ENCODE measurements at regions of chr7 and their contacts with region 1.

Region 1: GRCh38 chr7:132394283-132395198 is 181.7 kb downstream of the PLXNA4 start:
- DNase-seq: peak in 1 of 4 experiments; percentile 18
- ATAC-seq: peak; percentile 68
- H3K4me3 ChIP-seq: no peak overlapping the region
- H3K27ac ChIP-seq: no peak overlapping the region
- H3K4me1 ChIP-seq: no peaks in the 10 kb centered on the region
- H3K27me3 ChIP-seq: peaks cover 3 to 22% of the 10 kb centered on the region in 2 experiments; a peak in 4 of 5 replicates
- CTCF ChIP-seq: peak; percentile 30 to 43 (median 41); a peak in 4 of 6 replicates
- EP300 ChIP-seq: no peak
- POLR2A ChIP-seq: no peak
- RAD21 ChIP-seq: peak; percentile 60 to 61

Region 2: DNA sequence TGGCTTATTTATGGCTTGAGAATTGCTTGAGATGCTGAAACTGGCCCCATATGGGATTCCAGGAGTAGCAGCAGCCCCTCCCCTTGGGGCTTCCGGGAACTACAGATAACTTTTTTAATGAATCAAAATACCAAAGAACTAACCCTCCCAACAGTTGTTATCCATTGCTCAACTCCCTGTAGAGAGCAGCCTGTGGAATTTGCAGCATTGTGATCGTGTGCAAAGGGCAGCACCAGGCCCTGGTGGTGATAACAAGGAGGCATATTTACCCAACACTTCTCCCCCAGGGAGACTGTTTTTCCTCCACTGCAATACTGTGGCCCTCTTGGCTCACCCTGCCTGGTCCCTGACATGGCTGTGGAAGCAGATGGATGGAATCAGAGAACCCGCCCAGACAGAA is 14.5 kb before region 1 on chr7:
- CTCF ChIA-PET with region 1: no interaction called
- POLR2A ChIA-PET with region 1: no interaction called
- in situ Hi-C with region 1: no loop called
- intact Hi-C with region 1: no loop called
- DNase-seq: no peak
- ATAC-seq: no peak
- H3K4me3 ChIP-seq: no peak overlapping the region
- H3K27ac ChIP-seq: no peak overlapping the region
- H3K4me1 ChIP-seq: no peaks in the 10 kb centered on the region
- H3K27me3 ChIP-seq: 0 out of 5 replicates have a peak, but pooled peaks cover 0 to 5% of the 10 kb centered on the region in 2 experiments
- CTCF ChIP-seq: no peak
- EP300 ChIP-seq: no peak
- POLR2A ChIP-seq: no peak
- RAD21 ChIP-seq: no peak

Region 3: GRCh38 chr7:132508827-132509301 is 114.3 kb after region 1 on chr7:
- CTCF ChIA-PET with region 1: no interaction called
- POLR2A ChIA-PET with region 1: no interaction called
- in situ Hi-C with region 1: no loop called
- intact Hi-C with region 1: no loop called
- DNase-seq: peak in 1 of 4 experiments; percentile 11
- ATAC-seq: peak; percentile 48; the same call in 2 of the 3 replicates
- H3K4me3 ChIP-seq: no peak overlapping the region
- H3K27ac ChIP-seq: no peak overlapping the region
- H3K4me1 ChIP-seq: no peaks in the 10 kb centered on the region
- H3K27me3 ChIP-seq: peaks cover 37 to 53% of the 10 kb centered on the region in 2 experiments
- CTCF ChIP-seq: no peak
- EP300 ChIP-seq: no peak
- POLR2A ChIP-seq: no peak
- RAD21 ChIP-seq: no peak

Region 4: GRCh38 chr7:132580717-132581285 is 186.3 kb after region 1 on chr7:
- CTCF ChIA-PET with region 1: interaction called, 6 read pairs
- POLR2A ChIA-PET with region 1: no interaction called
- in situ Hi-C with region 1: no loop called
- intact Hi-C with region 1: loop called (anchors 5 kb)
- DNase-seq: peak; percentile 77 to 88 (median 80)
- ATAC-seq: peak; percentile 98
- H3K4me3 ChIP-seq: no peak overlapping the region
- H3K27ac ChIP-seq: no peak overlapping the region
- H3K4me1 ChIP-seq: peaks cover 0 to 8% of the 10 kb centered on the region in 2 experiments; a peak in 1 of 5 replicates
- H3K27me3 ChIP-seq: peaks cover 26 to 28% of the 10 kb centered on the region in 2 experiments; a peak in 4 of 5 replicates
- CTCF ChIP-seq: peak; percentile 91 to 94 (median 93)
- EP300 ChIP-seq: no peak
- POLR2A ChIP-seq: no peak
- RAD21 ChIP-seq: peak; percentile 88 to 90